SK-N-SH (cell line): ENCODE measurements at regions of chr4 and their contacts with region 1.

Region 1: DNA sequence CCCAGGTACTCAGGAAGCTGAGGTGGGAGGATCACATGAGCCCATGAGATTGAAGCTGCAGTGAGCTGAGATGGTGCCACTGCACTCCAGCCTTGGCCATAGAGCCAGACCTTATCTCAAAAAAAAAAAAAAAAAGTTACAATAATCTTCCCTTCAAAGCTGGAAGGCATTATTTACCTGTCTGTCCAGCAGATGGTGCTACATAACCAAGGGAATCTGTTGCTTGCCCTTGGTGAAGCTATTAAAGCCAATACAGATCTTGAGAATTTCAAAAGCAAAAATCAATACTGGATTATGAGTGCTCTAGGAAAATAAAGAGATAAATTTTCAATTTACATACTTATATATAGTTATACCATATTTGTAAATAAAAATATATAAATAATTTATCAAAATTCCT is 25.9 kb downstream of the PKD2 start:
- DNase-seq: peak; percentile 54
- H3K4me3 ChIP-seq: no peak overlapping the region; a peak in 1 of 4 replicates
- H3K27ac ChIP-seq: no peak overlapping the region
- H3K4me1 ChIP-seq: peaks cover 0 to 13% of the 10 kb centered on the region in 2 experiments; a peak in 1 of 4 replicates
- H3K27me3 ChIP-seq: no peaks in the 10 kb centered on the region
- CTCF ChIP-seq: peak; percentile 78
- EP300 ChIP-seq: no peak
- RAD21 ChIP-seq: peak; percentile 75

Region 2: DNA sequence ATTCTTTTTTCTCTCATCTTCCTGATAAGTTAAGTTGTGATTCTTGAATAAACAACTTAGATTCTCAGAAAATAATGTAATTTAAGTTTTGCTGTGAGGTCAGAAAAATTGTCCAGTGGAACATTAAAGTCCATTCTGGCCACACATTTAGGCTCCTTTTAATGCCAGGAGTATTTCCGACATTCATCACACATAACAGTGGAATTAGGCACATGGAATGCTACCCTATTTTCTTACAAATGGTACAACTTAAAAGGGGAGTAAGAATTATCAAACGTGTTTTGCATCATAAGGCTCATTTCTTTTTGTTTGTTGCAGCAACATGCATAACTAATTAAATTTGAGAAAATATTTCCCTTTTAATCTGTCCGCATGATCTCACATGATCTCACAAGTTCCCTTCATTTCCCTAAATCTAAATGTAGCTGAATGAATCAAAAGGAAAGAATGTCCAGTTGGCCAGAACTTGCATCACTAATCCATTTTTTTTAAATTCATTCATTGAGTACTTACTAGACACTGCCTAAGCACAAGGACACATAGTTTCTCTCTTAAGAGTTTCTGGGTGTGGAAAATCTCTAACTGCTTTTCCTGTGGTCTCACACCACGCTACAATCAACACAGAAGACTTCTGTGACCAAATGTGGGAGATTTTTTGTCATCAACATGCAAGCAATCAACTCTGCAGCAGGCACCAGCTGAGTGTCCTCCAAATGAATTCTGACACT is 526.2 kb before region 1 on chr4:
- CTCF ChIA-PET with region 1: no interaction called
- POLR2A ChIA-PET with region 1: no interaction called
- DNase-seq: no peak
- H3K4me3 ChIP-seq: no peak overlapping the region
- H3K27ac ChIP-seq: peak overlapping the region; percentile 24 to 76; a peak in 3 of 4 replicates
- H3K4me1 ChIP-seq: peaks cover 6 to 13% of the 10 kb centered on the region in 2 experiments; a peak in 3 of 4 replicates
- H3K27me3 ChIP-seq: no peaks in the 10 kb centered on the region
- CTCF ChIP-seq: no peak
- EP300 ChIP-seq: no peak
- RAD21 ChIP-seq: no peak

Region 3: DNA sequence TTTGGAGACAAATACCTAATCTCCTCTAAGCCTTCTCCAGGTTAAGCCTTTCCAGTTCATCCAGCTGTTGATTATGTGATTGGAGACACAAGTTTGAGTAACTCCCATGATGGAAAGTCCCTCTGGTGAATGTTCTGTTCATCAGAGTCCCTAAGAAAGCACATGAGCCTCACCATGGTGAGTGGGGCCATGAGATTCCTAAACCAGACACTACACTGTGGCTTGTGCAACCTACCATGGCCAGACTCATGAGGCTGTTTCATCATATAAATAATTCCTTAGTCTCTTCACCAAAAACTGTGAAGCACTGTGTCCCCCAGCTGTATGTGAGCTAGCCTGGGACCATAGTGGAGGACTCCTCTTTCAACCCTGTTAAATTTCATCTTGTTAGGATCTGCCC is 11.5 kb before region 1 on chr4:
- CTCF ChIA-PET with region 1: interaction called, 16 read pairs
- POLR2A ChIA-PET with region 1: no interaction called
- DNase-seq: no peak
- H3K4me3 ChIP-seq: no peak overlapping the region
- H3K27ac ChIP-seq: no peak overlapping the region
- H3K4me1 ChIP-seq: peaks cover 3 to 19% of the 10 kb centered on the region in 2 experiments
- H3K27me3 ChIP-seq: no peaks in the 10 kb centered on the region
- CTCF ChIP-seq: no peak
- EP300 ChIP-seq: no peak
- RAD21 ChIP-seq: no peak

Region 4: DNA sequence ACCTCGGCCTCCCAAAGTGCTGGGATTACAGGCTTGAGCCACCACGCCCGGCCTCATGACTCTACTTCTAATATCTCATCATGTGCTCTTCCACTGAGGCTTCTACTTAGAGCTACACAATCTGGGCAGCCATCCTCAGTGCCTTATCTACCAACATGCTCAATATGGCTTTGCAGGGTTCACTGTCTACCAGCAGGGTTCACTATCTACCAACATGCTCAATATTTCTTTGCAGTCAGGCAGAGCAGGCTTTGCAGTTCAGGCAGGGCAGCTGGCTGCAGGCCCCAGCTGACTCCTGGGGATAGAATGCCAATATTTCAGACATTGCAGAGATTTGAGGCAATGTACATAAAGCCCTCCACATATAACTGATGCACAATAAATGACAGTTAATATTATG is 21.6 kb after region 1 on chr4:
- CTCF ChIA-PET with region 1: interaction called, 13 read pairs
- POLR2A ChIA-PET with region 1: no interaction called
- DNase-seq: peak; percentile 20
- H3K4me3 ChIP-seq: no peak overlapping the region
- H3K27ac ChIP-seq: no peak overlapping the region
- H3K4me1 ChIP-seq: no peaks in the 10 kb centered on the region
- H3K27me3 ChIP-seq: no peaks in the 10 kb centered on the region
- CTCF ChIP-seq: peak; percentile 59
- EP300 ChIP-seq: no peak
- RAD21 ChIP-seq: peak; percentile 68